GM13977 (cell line): ENCODE measurements at regions of chr11 and their contacts with region 1.

Region 1: DNA sequence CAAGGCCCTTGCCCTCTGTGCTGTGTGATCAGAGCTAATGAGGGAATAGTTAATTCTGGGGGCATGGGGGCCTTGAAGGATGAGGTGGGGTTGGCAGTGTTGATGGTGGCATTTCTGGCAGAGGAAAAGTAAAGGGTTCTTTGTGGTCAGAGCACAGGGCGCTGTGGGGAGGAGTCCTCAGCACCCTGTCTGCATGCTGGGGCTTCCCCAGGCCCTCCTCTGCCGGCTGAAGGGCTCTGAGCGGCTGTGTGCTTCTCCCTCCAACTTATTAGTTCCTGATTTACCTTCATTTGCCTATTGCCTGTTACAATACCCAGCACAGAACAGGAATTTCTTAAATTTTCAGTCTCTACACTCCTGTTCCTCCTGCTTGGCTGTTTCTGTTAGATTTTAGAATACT is 122.8 kb downstream of the HIPK3 start:
- DNase-seq: no peak
- CTCF ChIP-seq: no peak

Region 2: DNA sequence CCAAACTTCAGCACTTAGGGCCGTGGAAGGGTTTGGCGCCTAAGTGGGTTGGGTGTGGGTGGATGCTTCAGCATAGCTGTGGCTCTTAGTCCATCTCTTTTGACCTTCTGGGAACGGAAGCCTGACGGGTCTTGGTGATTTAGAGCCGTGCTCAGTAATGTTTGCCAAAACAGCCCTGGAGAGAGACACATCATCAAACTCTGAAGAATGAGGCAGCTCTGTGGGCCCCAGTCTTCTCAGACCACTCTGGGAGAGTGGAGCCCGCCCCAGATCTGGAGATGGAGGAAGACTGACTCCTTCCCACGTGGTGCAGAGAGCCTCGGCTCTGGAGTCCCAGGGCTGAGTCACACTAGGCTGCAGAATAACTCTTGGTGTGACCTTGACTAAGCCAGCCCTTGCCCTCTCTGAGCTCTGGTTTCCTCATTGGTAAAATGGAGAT is 151.8 kb after region 1 on chr11:
- in situ Hi-C with region 1: loop called (anchors 10 kb)
- DNase-seq: no peak
- CTCF ChIP-seq: no peak

Region 3: DNA sequence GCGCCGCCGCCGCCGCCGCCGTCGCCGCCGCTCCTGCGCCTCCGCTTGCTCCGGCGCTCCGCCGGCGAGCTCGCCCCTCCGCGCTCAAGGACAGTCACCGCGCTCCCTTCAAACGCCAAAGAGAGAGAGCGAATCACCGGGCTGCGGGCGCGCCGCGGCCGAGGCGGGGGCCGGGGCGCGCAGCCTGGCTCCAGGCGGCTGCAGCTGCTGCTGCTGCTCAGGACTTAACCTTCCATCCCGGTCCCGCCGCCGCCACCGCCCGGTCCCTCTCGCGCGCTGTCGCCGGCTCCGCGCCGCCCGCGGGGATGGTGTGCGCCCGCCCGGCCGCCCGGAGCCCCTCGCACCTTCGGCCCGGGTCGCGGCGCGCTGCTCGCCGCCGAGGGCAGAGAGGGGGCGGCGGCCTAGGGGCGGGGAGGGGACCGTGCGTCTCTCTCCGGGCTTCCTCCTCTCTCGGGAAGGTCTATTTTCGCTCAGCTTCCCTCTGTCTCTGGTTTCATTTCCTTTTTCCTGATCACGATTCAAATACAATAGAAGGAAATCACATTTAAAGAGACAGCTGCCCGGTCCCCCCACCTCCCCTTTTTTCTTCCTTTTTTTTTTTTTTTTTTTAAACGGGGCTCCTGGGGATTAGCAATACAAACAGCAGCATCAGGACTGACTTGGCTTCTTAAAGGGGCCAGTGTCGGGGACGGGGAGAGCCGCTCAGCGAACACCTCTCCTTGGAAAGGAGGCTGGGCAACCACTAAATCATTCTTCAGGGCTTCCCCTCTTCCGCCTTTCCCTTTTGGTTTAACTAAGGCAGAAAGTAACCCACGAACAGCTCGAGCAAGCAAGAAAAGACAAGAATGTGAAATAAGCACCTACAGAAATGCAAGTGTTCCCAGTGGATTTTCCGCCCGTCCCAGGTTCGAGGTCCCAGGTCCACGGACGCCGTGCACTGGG is 489.8 kb after region 1 on chr11:
- in situ Hi-C with region 1: no loop called
- DNase-seq: peak; percentile 71
- CTCF ChIP-seq: no peak